Cardiac septum (tissue), 1 donor: ENCODE measurements at regions of chr2 and their contacts with region 1.

Region 1: GRCh38 chr2:20446917-20447436 is at the start of gene RHOB:
- DNase-seq: peak; percentile 98
- total RNA-seq, gene RHOB: 98.4 TPM

Region 2: GRCh38 chr2:20378792-20379519 is 68.0 kb before region 1 on chr2:
- intact Hi-C with region 1: loop called (anchors 1 kb)
- DNase-seq: peak; percentile 91

Region 3: DNA sequence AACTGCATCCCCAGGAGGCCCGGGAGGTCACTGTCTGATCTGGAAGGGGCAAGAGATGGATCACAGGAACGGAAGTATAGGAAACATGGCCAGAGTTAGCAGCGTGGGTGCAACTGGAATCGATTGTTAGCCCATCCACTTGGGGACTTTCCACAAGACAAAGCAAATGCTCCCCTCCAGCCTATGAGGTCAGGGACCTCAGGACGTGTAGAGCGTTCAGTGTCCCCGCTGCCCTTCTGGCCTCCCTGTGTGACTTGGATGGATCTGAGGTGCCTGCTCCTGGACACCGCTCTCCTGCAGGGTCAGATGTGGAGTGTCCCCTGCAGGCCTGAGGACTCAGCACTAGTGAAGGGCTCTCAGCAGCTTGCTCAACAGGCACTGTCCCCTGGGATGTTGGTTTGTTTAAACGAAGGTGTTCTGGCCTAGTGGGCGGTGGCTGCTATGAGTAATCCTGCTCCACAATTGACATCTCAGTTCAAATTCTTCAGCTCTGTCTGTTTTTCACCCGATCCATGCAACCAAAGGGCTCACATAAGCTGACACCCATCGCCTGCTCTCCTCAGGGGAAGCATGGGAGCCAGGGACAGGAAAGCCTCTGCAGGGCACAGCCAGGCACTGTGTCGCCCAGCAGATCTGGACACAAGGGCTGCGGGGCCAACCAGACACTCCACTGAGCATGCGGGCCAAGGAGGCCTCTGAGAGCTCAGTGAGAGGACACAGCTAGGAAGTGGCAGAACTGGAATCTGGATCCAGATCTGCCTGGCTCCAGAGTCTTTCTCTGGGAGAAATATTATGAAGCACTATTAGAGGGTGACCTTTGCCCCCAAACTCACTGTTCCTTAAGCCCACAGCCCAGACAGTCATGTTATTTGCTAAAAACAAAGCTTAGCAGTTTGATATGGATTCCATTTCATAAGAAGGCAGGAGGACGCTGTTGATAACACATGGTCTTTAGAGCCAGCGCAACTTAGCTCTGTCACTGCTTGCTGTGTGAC is 78.4 kb after region 1 on chr2:
- intact Hi-C with region 1: loop called (anchors 2 kb)
- DNase-seq: no peak

Region 4: GRCh38 chr2:20578895-20579825 is 132.2 kb after region 1 on chr2:
- intact Hi-C with region 1: loop called (anchors 2 kb)
- DNase-seq: peak; percentile 90

Region 5: DNA sequence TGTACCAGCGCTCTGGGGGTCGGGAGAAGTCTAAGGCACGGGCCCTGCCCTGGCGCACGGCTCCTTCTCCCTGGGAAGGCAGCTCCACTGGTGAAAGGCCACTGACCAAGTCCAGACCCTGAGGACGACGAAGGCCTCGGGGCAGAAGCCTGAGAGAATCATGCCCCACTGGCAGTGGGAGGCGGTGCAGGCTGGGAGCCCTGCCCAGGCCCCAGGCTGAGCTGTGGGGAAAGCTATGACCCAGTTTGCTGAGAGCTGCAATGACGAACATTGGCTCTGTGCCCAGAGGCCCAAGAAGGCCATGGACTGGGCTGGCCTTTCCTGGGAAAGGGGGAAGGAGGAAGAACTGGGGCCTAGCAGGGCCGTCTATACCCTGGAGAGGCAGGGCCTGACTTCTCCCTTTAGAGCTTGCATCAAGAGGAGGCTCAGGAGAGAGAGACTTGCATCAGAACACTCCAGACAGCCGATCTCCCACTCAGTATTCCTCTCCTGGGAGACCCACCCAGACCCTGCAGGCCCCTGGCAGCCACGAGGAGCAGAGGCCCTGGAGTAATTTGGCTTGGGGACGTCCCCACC is 171.0 kb after region 1 on chr2:
- intact Hi-C with region 1: loop called (anchors 1 kb)
- DNase-seq: peak; percentile 97

Region 6: DNA sequence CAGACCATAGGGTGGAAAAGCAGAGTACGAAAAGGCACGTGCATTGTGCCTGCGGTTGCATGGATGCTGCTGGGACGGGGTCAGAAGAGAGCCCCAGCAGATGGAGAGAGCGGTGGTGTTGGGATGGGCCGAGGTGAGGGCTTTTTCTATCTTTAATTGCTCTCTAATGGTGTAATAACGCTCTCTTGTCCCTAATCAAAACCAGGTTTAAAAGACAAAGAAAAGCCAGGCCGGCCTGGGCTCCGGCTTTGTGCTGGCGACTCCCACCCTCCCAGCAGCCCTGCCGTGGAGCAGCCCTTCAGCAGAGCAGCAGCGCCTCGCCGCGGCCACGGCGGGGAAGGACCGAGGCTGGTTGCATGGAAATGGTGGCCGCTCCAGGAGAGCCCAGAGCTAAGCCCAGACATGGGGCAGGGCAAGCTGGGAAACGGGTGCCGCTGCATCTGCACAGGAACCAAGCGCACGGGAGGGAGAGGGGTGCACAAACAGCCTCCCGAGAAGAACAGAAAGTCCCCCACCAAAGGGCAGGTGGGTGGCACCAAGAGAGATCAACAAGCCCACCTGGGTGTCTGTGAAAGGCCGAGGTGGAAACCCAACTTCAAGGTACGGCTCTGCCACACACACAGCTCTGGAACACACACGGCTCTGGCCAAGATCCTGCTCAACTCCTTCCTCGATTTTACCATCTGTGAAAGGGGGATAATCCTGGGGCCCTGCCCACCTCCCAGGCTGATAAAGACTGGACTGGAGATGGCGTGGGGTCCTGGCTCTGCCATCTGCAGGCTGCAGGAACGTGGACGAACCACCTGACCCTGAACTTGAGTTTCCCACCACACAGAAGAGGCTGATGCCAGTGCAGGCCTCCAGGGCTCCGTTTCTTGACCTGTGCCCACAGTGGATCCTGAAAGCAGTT is 189.0 kb after region 1 on chr2:
- intact Hi-C with region 1: loop called (anchors 1 kb)
- DNase-seq: peak; percentile 91